Transverse colon (tissue), 4 donors: ENCODE measurements at regions of chr10 and their contacts with region 1.

Region 1: GRCh38 chr10:121886997-121887622 is 40.7 kb downstream of the ATE1 start:
- DNase-seq: peak; percentile 55
- H3K4me3 ChIP-seq: no peak overlapping the region
- H3K27ac ChIP-seq: no peak overlapping the region
- H3K4me1 ChIP-seq: no peaks in the 10 kb centered on the region
- H3K27me3 ChIP-seq: no peaks in the 10 kb centered on the region
- CTCF ChIP-seq: peak; percentile 74 to 81 (median 76)
- EP300 ChIP-seq: no peak
- POLR2A ChIP-seq: no peak

Region 2: GRCh38 chr10:120931423-120931822 is 955.7 kb before region 1 on chr10:
- in situ Hi-C with region 1: loop called in 3 of 4 experiments (anchors 10 to 25 kb)
- intact Hi-C with region 1: no loop called
- DNase-seq: no peak
- H3K4me3 ChIP-seq: no peak overlapping the region
- H3K27ac ChIP-seq: no peak overlapping the region
- H3K4me1 ChIP-seq: no peaks in the 10 kb centered on the region
- H3K27me3 ChIP-seq: no peaks in the 10 kb centered on the region
- CTCF ChIP-seq: no peak
- EP300 ChIP-seq: no peak
- POLR2A ChIP-seq: no peak

Region 3: GRCh38 chr10:121033366-121033765 is 853.7 kb before region 1 on chr10:
- in situ Hi-C with region 1: no loop called
- intact Hi-C with region 1: no loop called
- DNase-seq: no peak
- H3K4me3 ChIP-seq: no peak overlapping the region
- H3K27ac ChIP-seq: peak overlapping the region; percentile 28 to 79 (median 54)
- H3K4me1 ChIP-seq: peaks cover 0 to 17% (median 4%) of the 10 kb centered on the region in 4 donors
- H3K27me3 ChIP-seq: no peaks in the 10 kb centered on the region
- CTCF ChIP-seq: no peak
- EP300 ChIP-seq: peak; percentile 69
- POLR2A ChIP-seq: no peak